ENCODE measurements at regions of chr18 and their contacts with region 1.

Region 1: GRCh38 chr18:35240664-35241447 is at the start of gene ZNF397:
- DNase-seq: peak; percentile 87 to 97 (median 94)
- ATAC-seq: peak; percentile 96
- H3K4me3 ChIP-seq: peak within 1 kb of the TSS; percentile 83
- H3K4me3 Mint-ChIP-seq: peak within 1 kb of the TSS; percentile 98
- H3K27ac ChIP-seq: peak within 1 kb of the TSS; percentile 90 to 94
- H3K27ac Mint-ChIP-seq: peak within 1 kb of the TSS; percentile 99
- H3K4me1 ChIP-seq: peaks cover 9% of the 10 kb centered on the region
- H3K4me1 Mint-ChIP-seq: peaks cover 37% of the 10 kb centered on the region
- H3K27me3 ChIP-seq: no peaks in the 10 kb centered on the region
- H3K27me3 Mint-ChIP-seq: no peaks in the 10 kb centered on the region
- CTCF ChIP-seq: no peak
- total RNA-seq, gene ZNF397: 7.6 to 10.0 TPM

Region 2: GRCh38 chr18:35174093-35174731 is 66.6 kb before region 1 on chr18:
- CTCF ChIA-PET with region 1: no interaction called
- POLR2A ChIA-PET with region 1: no interaction called
- intact Hi-C with region 1: no loop called
- DNase-seq: peak in 2 of 14 experiments; percentile 13 to 22
- ATAC-seq: peak; percentile 51
- H3K4me3 ChIP-seq: no peak overlapping the region
- H3K4me3 Mint-ChIP-seq: no peak overlapping the region
- H3K27ac ChIP-seq: no peak overlapping the region
- H3K27ac Mint-ChIP-seq: no peak overlapping the region
- H3K4me1 ChIP-seq: no peaks in the 10 kb centered on the region
- H3K4me1 Mint-ChIP-seq: peaks cover 20% of the 10 kb centered on the region
- H3K27me3 ChIP-seq: no peaks in the 10 kb centered on the region
- H3K27me3 Mint-ChIP-seq: no peaks in the 10 kb centered on the region
- CTCF ChIP-seq: no peak

Region 3: GRCh38 chr18:35267161-35267651 is 26.4 kb after region 1 on chr18:
- CTCF ChIA-PET with region 1: interaction called, 4 read pairs
- POLR2A ChIA-PET with region 1: interaction called, 13 read pairs
- intact Hi-C with region 1: loop called in 1 of 2 experiments (anchors 1 kb)
- DNase-seq: peak; percentile 40 to 85 (median 66)
- ATAC-seq: peak; percentile 76
- H3K4me3 ChIP-seq: peak overlapping the region; percentile 76
- H3K4me3 Mint-ChIP-seq: peak overlapping the region; percentile 96
- H3K27ac ChIP-seq: peak overlapping the region; percentile 69 to 75
- H3K27ac Mint-ChIP-seq: peak overlapping the region; percentile 92
- H3K4me1 ChIP-seq: peaks cover 18% of the 10 kb centered on the region
- H3K4me1 Mint-ChIP-seq: peaks cover 28% of the 10 kb centered on the region
- H3K27me3 ChIP-seq: no peaks in the 10 kb centered on the region
- H3K27me3 Mint-ChIP-seq: no peaks in the 10 kb centered on the region
- CTCF ChIP-seq: no peak

Region 4: DNA sequence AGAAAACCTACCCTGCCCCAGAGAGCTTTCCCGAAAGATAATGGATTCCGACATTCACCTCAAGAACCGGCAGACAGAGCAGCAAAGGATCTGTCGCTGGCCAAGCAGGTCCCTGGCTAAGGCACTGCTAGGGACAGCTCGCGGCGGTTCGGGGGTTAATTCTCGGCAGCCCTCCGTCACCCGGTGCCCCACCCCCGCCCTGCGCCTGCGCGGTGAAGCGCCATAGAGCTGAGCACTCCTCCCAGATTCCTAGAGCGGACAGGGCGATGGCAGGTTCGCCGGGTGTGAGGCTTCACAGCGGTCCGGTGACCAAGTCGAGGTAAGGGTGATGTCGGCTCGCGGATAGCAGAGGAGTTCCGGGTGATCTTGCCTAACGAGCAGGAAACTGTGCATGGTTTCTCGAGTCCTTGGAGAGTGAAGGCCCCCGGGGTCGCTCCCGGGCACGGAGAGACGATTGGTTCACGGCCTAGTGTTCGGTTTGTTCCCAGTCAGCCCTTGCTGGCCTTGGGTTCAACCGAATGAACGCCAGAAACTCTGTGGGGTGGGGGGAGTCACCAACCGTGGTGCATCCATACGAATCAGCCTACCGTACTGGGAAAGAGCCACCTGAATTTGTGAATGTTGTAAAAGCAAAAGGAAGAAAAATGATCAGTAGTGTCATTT is 49.3 kb after region 1 on chr18 and contains the start of gene ZSCAN30:
- CTCF ChIA-PET with region 1: interaction called, 4 read pairs
- POLR2A ChIA-PET with region 1: interaction called, 26 read pairs
- intact Hi-C with region 1: loop called (anchors 1 to 2 kb)
- DNase-seq: peak; percentile 93 to 98 (median 96)
- ATAC-seq: peak; percentile 90
- H3K4me3 ChIP-seq: peak within 1 kb of the TSS; percentile 92
- H3K4me3 Mint-ChIP-seq: peak within 1 kb of the TSS; percentile 99
- H3K27ac ChIP-seq: peak within 1 kb of the TSS; percentile 55 to 87
- H3K27ac Mint-ChIP-seq: peak within 1 kb of the TSS; percentile 96
- H3K4me1 ChIP-seq: peaks cover 31% of the 10 kb centered on the region
- H3K4me1 Mint-ChIP-seq: peaks cover 78% of the 10 kb centered on the region
- H3K27me3 ChIP-seq: no peaks in the 10 kb centered on the region
- H3K27me3 Mint-ChIP-seq: no peaks in the 10 kb centered on the region
- CTCF ChIP-seq: no peak
- total RNA-seq, gene ZSCAN30: 9.6 to 11.6 TPM

Region 5: GRCh38 chr18:36828630-36829361 is 1587.9 kb after region 1 on chr18 and contains the starts of genes KIAA1328 and TPGS2:
- CTCF ChIA-PET with region 1: no interaction called
- POLR2A ChIA-PET with region 1: interaction called, 4 read pairs
- intact Hi-C with region 1: loop called in 1 of 2 experiments (anchors 10 kb)
- DNase-seq: peak; percentile 68 to 96 (median 83)
- ATAC-seq: peak; percentile 90
- H3K4me3 ChIP-seq: peak within 1 kb of the TSS; percentile 86
- H3K4me3 Mint-ChIP-seq: peak within 1 kb of the TSS; percentile 87
- H3K27ac ChIP-seq: peak within 1 kb of the TSS; percentile 58 to 78
- H3K27ac Mint-ChIP-seq: peak within 1 kb of the TSS; percentile 73
- H3K4me1 ChIP-seq: peaks cover 24% of the 10 kb centered on the region
- H3K4me1 Mint-ChIP-seq: peaks cover 60% of the 10 kb centered on the region
- H3K27me3 ChIP-seq: no peaks in the 10 kb centered on the region
- H3K27me3 Mint-ChIP-seq: no peaks in the 10 kb centered on the region
- CTCF ChIP-seq: peak; percentile 63
- total RNA-seq, gene KIAA1328: 8.7 to 9.4 TPM
- total RNA-seq, gene TPGS2: 16.4 to 19.0 TPM

Measured in CD4-positive, alpha-beta T cell (primary cell).